ENCODE measurements at regions of chr17 and their contacts with region 1.

Region 1: GRCh38 chr17:63621766-63622519 is at the start of gene MAP3K3:
- DNase-seq: peak; percentile 97
- H3K4me3 Mint-ChIP-seq: peak within 1 kb of the TSS; percentile 100
- H3K27ac Mint-ChIP-seq: peak within 1 kb of the TSS; percentile 95
- H3K4me1 Mint-ChIP-seq: peaks cover 44% of the 10 kb centered on the region
- H3K27me3 Mint-ChIP-seq: peaks cover 7% of the 10 kb centered on the region
- total RNA-seq, gene MAP3K3: 27.9 and 29.6 TPM in 2 replicates

Region 2: DNA sequence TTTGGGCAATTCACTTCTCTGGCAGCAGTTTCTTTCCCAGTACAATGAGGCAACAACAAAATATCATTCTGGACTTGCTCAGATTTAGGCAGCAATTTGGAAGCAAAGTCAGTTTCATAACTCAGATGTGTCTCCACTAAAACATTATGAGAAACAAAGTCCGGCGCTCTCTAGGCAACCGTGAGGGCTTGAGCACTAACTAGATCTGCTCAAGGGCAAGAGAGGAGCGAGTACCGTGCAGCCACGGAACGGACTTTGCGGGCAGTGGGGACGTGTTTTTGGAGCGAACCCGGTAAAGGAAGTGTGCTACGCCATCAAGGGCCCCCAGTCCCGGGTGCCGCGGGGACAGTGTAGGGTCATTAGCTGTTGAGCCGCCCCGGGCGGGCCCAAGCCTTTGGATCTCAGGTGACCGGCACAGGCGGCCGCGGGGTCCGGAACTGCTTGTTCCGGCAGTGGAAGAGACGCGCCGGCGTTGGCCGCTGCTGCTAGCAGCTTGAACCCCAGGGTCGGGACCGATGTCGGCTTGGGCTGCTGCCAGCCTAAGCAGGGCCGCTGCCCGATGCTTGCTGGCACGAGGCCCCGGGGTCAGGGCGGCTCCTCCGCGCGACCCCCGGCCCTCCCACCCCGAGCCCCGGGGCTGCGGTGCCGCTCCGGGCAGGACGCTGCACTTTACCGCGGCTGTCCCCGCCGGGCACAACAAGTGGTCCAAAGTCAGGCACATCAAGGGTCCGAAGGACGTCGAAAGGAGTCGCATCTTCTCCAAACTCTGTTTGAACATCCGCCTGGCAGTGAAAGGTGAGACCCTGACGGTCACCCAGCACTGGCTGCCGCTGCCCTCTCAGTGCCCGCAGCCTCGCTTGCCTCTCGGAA is 21.1 kb before region 1 on chr17 and contains the start of gene TACO1:
- intact Hi-C with region 1: loop called (anchors 1 kb)
- DNase-seq: peak; percentile 75
- H3K4me3 Mint-ChIP-seq: peak within 1 kb of the TSS; percentile 99
- H3K27ac Mint-ChIP-seq: peak within 1 kb of the TSS; percentile 94
- H3K4me1 Mint-ChIP-seq: peaks cover 26% of the 10 kb centered on the region
- H3K27me3 Mint-ChIP-seq: no peaks in the 10 kb centered on the region
- total RNA-seq, gene TACO1: 30.8 and 32.0 TPM in 2 replicates

Region 3: GRCh38 chr17:63697341-63698286 is 75.7 kb after region 1 on chr17:
- intact Hi-C with region 1: loop called (anchors 1 kb)
- DNase-seq: peak; percentile 76
- H3K4me3 Mint-ChIP-seq: peak overlapping the region; percentile 96
- H3K27ac Mint-ChIP-seq: peak overlapping the region; percentile 96
- H3K4me1 Mint-ChIP-seq: peaks cover 53% of the 10 kb centered on the region
- H3K27me3 Mint-ChIP-seq: no peaks in the 10 kb centered on the region

Region 4: DNA sequence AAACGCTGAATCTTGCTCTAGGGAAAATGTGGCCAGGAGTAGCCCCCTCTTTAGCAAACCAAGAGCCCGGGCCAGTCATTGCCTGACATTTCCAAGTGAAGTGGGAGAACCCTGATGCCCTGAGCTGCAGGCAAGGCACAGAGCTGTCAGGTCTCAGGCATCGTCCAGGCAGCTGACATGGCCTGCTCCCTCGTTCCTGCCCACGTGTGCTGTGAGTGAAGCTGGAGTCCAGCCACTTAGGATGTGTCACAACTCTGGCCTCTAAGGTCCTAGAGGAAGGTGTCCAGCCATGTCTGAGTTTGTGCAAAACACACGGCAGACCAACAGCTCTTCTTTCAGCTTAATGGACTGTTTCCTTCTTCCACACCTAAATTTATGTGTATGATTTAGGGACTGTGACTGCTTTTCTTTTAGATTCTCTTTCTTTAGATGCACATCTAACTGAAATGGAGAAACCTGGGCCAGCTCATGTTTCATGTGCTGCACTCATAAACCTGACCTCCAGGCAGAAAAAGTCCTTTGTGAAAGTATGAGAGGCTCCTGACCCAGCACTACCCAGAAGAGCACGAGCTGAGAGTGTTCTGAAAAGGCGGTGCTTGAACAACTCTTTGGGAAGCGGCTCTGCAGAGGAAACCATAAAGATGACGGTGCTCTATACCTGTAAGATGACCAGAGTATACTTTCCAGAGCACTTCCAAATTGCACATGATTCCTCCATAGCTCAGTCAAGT is 92.8 kb after region 1 on chr17:
- intact Hi-C with region 1: no loop called
- DNase-seq: no peak
- H3K4me3 Mint-ChIP-seq: no peak overlapping the region
- H3K27ac Mint-ChIP-seq: no peak overlapping the region
- H3K4me1 Mint-ChIP-seq: peaks cover 6% of the 10 kb centered on the region
- H3K27me3 Mint-ChIP-seq: no peaks in the 10 kb centered on the region

Region 5: DNA sequence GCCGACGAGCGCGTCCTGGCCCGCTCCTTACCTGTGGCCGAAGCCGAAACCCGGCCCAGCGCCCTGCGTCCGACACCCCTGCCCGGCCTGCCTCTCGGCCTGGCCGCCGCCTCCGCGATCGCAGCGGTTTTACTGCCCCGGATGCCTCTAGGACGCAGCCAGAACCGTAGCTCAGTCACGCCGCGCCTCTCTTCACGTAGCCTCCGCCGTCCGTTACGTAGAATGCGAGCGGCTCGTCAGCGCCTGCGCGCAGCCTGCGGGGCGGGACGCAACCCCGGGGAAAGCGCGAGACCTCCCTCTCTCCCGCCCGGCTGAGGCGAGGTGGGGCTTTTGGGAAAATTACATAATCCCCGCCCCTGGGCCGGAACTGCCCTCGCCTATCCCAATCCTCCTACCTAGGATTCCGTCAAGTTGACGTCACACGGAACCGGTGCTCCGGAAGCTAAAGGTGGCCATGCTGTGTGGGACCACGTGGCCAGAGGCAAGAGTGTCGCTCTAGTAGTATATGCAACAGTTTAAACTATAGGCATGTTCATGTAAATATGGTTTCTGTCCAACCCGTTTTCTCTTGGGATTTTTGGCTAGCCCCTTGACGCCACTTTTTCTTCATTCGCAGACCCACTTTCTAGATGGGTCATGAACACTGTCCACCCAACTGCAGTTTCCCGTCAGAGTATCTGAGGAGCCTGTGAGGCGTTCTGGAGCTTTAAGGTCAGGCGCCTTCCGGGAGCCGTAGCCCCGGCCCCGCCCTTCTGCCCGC is 151.6 kb after region 1 on chr17 and contains the start of gene CCDC47:
- intact Hi-C with region 1: loop called (anchors 1 kb)
- DNase-seq: peak; percentile 99
- H3K4me3 Mint-ChIP-seq: peak within 1 kb of the TSS; percentile 96
- H3K27ac Mint-ChIP-seq: peak within 1 kb of the TSS; percentile 100
- H3K4me1 Mint-ChIP-seq: peaks cover 63% of the 10 kb centered on the region
- H3K27me3 Mint-ChIP-seq: no peaks in the 10 kb centered on the region
- total RNA-seq, gene CCDC47: 74.8 and 79.2 TPM in 2 replicates

Region 6: DNA sequence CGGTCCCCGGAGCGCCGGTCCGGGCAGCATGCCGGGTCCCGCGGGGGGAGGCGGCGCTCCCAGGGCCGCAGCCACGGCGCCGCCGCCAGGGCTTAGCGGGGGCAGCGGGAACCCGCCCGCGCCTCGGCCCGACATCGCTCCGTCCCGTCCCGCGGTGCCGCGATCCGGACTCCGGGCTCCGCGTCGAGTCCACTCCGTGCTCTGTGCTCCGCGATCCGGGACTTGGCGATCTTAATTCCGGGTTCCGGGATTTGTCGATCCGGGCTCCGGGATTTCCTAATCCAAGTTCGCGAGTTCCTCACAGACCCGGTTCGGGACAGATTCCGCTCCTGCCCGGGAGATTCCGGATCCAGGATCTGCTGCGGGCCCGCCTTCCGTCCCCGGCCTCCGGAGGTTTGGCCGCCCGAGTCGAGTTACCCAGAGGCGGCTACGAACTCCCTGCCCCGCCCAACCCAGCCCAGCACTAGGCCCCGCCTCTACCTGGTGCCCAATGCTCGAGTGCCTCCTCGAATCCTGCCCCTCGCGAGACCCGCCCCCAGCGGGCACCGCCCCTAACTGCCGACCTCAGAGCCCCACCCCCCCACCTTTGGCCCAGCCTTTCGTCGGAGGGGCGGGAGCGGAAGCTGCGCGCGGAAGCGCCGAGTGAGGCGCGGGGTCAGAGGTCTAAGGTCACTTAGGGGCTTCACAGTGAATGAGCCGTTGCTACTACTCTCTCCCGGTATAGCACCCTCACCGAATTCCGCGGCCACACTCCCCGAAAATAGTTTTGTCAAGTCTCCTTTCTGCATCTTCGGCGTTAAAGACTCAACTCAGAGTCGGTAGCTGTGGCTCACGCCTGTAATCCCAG is 220.8 kb after region 1 on chr17 and contains the start of gene SMARCD2:
- intact Hi-C with region 1: loop called (anchors 2 kb)
- DNase-seq: peak; percentile 98
- H3K4me3 Mint-ChIP-seq: peak within 1 kb of the TSS; percentile 96
- H3K27ac Mint-ChIP-seq: peak within 1 kb of the TSS; percentile 91
- H3K4me1 Mint-ChIP-seq: peaks cover 39% of the 10 kb centered on the region
- H3K27me3 Mint-ChIP-seq: no peaks in the 10 kb centered on the region
- total RNA-seq, gene SMARCD2: 116 TPM in 2 replicates

Region 7: DNA sequence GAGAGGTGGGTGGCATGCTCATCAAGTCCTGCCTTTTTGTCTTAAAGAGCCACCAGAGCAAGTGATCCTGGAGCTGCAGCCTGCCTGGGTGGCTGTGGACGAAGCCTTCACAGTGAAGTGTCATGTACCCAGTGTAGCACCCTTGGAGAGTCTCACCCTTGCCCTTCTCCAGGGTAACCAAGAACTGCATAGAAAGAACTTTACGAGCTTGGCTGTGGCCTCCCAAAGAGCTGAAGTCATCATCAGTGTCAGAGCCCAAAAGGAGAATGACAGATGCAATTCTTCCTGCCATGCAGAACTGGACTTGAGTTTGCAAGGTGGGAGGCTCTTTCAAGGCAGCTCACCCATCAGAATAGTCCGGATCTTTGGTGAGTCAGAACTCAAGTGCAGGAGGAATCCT is 237.3 kb after region 1 on chr17:
- intact Hi-C with region 1: no loop called
- DNase-seq: no peak
- H3K4me3 Mint-ChIP-seq: no peak overlapping the region
- H3K27ac Mint-ChIP-seq: no peak overlapping the region
- H3K4me1 Mint-ChIP-seq: no peaks in the 10 kb centered on the region
- H3K27me3 Mint-ChIP-seq: peaks cover 31% of the 10 kb centered on the region

Region 8: DNA sequence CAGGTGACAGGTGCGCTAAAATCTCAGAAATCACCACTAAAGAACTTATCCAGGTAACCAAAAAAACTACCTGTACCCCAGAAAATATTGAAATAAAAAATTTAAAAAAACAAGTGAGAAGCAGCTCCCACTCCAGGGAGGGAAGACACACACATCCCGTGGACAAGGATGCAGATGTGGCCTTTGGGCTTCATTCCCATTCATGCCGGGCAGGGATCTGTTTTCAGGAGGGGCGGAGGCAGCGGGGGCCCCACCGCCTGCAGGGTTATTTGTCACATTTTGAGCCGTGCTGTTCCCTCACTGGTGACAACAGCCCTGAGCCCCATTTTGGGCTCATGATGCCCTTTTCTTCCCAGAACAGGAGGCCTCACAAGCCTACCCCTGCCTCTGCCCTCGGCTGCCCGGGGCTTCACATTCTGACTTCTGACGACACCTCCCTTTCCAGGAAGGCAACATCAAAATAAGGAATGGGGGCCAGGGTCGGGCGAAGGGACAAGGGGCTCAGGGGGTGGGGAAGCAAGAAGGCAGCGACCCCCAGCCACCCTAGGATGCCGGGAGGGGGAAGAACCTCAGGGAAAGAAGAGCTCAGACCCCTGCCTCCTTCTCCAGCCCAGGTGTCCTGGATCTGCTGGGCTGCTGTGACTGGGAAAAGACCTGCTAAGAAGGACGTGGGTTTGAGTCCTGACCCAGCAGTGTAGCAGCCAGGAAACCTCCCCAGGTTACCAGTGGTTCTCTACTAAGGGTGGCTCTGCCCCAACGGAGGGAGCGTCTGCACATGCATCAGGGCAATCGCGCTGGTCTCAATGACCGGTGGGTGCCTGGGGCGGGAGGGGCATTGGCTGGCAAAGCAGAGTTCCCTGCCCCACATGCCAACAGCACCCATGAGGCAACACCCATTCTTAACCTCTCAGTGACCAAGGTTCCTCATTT is 312.5 kb after region 1 on chr17:
- intact Hi-C with region 1: no loop called
- DNase-seq: no peak
- H3K4me3 Mint-ChIP-seq: no peak overlapping the region
- H3K27ac Mint-ChIP-seq: no peak overlapping the region
- H3K4me1 Mint-ChIP-seq: peaks cover 28% of the 10 kb centered on the region
- H3K27me3 Mint-ChIP-seq: peaks cover 19% of the 10 kb centered on the region